ENCODE measurements at regions of chr2 and their contacts with region 1.

Region 1: DNA sequence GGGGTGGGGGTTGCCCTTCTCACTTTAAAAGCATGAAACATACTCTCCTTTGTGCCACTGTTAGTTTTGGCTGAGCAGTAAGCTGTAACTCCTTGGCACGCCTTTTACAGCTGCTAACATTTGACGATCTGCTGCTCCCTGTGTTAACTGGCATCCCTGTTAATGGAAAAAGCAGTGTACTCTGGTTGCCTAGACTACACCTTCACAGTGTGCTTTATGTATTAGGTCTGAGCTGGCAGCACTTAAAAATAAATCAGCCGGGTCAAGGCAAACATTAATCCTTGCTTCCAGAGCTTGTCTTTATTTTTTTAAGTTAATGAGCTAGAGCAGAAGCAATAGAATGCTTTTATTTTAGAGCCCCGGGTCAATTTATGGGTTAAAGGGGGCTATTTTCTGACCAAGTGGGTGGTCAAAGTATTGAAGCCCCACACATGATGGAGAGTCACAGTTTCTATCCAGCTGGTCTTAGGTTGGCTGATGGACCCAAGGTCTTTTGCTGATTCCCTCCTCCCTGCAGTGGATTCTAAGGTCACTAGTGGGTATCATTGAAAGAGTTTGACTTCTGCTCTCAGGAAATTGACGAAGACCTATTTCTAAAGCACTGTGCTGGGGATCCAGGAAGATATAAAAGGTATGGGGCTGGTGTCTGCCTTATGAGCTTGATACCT is 54.5 kb downstream of the CFAP221 start:
- DNase-seq: no peak
- H3K4me3 ChIP-seq: no peak overlapping the region
- H3K27ac ChIP-seq: no peak overlapping the region
- H3K4me1 ChIP-seq: no peaks in the 10 kb centered on the region
- H3K27me3 ChIP-seq: no peaks in the 10 kb centered on the region
- CTCF ChIP-seq: no peak
- EP300 ChIP-seq: no peak
- POLR2A ChIP-seq: no peak
- RAD21 ChIP-seq: no peak

Region 2: GRCh38 chr2:119544075-119544938 is 54.4 kb before region 1 on chr2 and contains the start of gene CFAP221:
- CTCF ChIA-PET with region 1: no interaction called
- POLR2A ChIA-PET with region 1: no interaction called
- DNase-seq: peak in 1 of 2 experiments; percentile 93
- H3K4me3 ChIP-seq: peak within 1 kb of the TSS; percentile 61 to 82 (median 70)
- H3K27ac ChIP-seq: peak within 1 kb of the TSS; percentile 90
- H3K4me1 ChIP-seq: peaks cover 0 to 2% (median 0%) of the 10 kb centered on the region in 4 experiments; a peak in 1 of 7 replicates
- H3K27me3 ChIP-seq: peaks cover 0 to 8% (median 0%) of the 10 kb centered on the region in 4 experiments; a peak in 1 of 7 replicates
- CTCF ChIP-seq: no peak
- EP300 ChIP-seq: peak in 1 of 2 experiments; percentile 99; a peak in 2 of 3 replicates
- POLR2A ChIP-seq: peak in 1 of 2 experiments; percentile 19; a peak in 1 of 3 replicates
- RAD21 ChIP-seq: no peak
- total RNA-seq, gene CFAP221: 0.36 and 0.71 TPM in 2 replicates

Region 3: DNA sequence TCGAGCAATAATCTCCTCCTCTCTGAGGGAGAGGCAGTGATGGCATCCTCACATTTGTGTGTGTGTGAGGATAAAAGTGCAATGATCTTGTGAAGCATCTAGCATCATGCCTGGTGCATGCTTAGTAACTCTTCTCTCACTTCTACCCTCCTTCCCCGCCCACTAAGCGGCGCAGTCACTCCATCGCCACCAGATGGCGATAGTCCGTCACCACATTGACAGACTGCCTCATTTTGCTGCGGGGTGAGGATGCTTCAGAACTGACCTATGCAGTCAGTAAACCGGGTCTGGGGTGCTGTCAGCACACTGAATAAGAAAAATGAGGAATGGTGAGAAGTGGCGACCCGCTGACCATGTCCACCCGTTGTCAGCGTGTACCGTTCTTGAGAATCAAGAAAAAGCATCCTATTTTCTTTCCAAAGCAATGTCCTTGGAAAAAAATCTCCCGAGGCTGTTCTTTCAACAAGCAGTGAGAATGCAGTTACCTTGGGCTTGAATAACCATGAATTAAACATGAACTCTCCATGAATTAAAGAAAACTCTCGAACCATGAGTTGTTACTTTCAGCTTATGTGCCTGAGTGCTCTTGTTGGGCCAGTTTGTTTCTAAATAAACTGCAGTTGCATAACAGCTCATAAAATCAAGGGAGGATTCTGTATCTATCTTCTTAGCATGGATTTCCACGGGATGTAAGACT is 43.0 kb after region 1 on chr2:
- CTCF ChIA-PET with region 1: interaction called, 11 read pairs
- POLR2A ChIA-PET with region 1: no interaction called
- DNase-seq: peak; percentile 47 to 86
- H3K4me3 ChIP-seq: no peak overlapping the region
- H3K27ac ChIP-seq: no peak overlapping the region
- H3K4me1 ChIP-seq: peaks cover 0 to 5% (median 2%) of the 10 kb centered on the region in 4 experiments; a peak in 2 of 7 replicates
- H3K27me3 ChIP-seq: no peaks in the 10 kb centered on the region; a peak in 1 of 7 replicates
- CTCF ChIP-seq: peak; percentile 95 to 99 (median 99)
- EP300 ChIP-seq: no peak
- POLR2A ChIP-seq: no peak
- RAD21 ChIP-seq: peak; percentile 92 to 96